Right cardiac atrium (tissue), 5 donors: ENCODE measurements at regions of chr9 and their contacts with region 1.

Region 1: GRCh38 chr9:5186416-5187169 is 1.2 kb upstream of the INSL6 start:
- DNase-seq: peak in 1 of 3 donors; percentile 71
- ATAC-seq: peak; percentile 66 to 67
- H3K4me3 ChIP-seq: no peak overlapping the region
- H3K27ac ChIP-seq: no peak overlapping the region
- H3K4me1 ChIP-seq: no peaks in the 10 kb centered on the region
- H3K27me3 ChIP-seq: no peaks in the 10 kb centered on the region

Region 2: GRCh38 chr9:5052838-5053237 is 133.8 kb before region 1 on chr9:
- intact Hi-C with region 1: no loop called
- DNase-seq: no peak
- ATAC-seq: no peak
- H3K4me3 ChIP-seq: no peak overlapping the region
- H3K27ac ChIP-seq: no peak overlapping the region
- H3K4me1 ChIP-seq: no peaks in the 10 kb centered on the region
- H3K27me3 ChIP-seq: no peaks in the 10 kb centered on the region

Region 3: DNA sequence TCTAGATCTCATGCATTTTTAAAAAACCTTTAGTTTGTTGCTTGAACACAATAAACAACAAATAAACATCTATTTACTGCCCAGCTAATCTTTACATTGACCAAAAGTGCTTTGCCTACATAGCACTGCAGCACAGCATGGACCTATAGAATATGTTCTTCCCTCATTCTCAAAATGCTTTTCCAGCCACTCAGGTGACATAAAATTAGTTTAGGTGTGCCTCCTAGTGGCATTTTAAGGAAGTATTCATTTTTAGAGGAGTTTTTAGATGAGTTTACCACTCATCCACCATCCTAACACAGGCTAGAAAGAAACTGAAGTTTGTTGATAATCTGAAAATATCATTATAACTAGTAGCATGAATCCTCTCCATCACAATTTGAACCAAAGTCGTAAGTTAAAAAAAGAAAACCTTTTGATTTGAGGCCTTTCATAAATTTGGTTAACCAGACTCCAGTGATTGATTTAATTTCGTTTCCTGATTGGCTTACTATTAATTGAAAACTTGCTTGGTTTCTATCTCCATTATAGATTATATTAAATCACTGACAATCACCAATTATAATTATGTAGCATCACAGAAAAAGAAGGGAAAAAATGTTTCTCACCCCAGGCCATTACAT is 238.5 kb after region 1 on chr9:
- intact Hi-C with region 1: loop called in 1 of 4 experiments (anchors 10 kb)
- DNase-seq: no peak
- ATAC-seq: no peak
- H3K4me3 ChIP-seq: no peak overlapping the region
- H3K27ac ChIP-seq: no peak overlapping the region
- H3K4me1 ChIP-seq: no peaks in the 10 kb centered on the region
- H3K27me3 ChIP-seq: no peaks in the 10 kb centered on the region

Region 4: DNA sequence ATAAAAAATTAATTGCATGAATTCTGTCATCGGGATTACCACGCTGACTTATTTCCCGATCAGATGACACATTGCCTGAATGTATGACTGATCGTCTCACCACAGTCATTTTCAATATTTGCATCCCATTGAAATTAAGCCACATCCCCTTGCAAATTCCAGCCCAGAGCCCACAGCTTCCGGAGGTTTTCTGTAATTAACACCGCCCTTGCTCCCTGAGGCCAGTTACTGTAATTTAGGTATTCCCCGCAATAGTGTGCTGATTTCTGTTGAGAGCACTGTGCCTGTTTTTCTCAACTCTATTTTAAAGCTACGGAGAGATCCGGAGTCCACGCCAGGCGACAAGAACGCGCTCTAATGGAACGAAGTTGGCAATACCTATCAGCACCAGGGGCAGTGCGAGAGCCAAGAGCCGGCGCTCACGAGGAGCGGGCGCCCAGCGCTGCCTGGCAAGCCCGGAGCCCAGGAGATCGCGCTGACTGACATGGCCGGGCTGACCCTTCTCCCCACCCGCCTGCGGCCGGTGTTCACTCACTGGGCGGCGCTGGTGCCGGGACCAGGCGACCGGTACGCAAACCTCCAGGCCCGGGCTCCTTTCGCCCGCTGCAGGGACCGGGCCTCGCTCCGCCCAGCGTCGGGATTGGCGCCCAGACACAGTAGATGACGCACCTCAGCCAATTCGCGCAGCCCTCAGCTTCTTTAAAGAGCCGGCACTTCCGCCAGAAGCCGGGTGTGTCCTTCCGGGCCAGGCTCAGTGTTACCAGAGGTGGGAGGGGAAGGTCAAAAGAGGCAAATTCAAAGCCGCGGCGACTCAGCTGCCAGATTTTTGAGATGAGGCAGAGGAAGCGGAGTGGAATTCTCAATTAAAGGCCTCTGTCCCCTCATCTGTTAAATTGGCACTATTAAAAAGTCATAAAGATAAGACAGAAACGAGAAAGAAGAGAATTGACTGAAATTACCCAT is 250.9 kb after region 1 on chr9 and contains the start of gene PLGRKT:
- intact Hi-C with region 1: loop called in 2 of 4 experiments (anchors 10 kb)
- DNase-seq: peak; percentile 97 to 98 (median 98)
- ATAC-seq: peak; percentile 99 to 100
- H3K4me3 ChIP-seq: peak within 1 kb of the TSS; percentile 61
- H3K27ac ChIP-seq: peak within 1 kb of the TSS; percentile 91
- H3K4me1 ChIP-seq: peaks cover 5% of the 10 kb centered on the region
- H3K27me3 ChIP-seq: no peaks in the 10 kb centered on the region
- total RNA-seq, gene PLGRKT: 31.5 to 40.3 (median 34.1) TPM

Region 5: GRCh38 chr9:5608298-5609225 is 422.0 kb after region 1 on chr9:
- intact Hi-C with region 1: loop called in 3 of 4 experiments (anchors 5 to 10 kb)
- DNase-seq: no peak
- ATAC-seq: peak; percentile 80 to 85
- H3K4me3 ChIP-seq: peak overlapping the region; percentile 66
- H3K27ac ChIP-seq: peak overlapping the region; percentile 85
- H3K4me1 ChIP-seq: peaks cover 4% of the 10 kb centered on the region
- H3K27me3 ChIP-seq: no peaks in the 10 kb centered on the region

Region 6: DNA sequence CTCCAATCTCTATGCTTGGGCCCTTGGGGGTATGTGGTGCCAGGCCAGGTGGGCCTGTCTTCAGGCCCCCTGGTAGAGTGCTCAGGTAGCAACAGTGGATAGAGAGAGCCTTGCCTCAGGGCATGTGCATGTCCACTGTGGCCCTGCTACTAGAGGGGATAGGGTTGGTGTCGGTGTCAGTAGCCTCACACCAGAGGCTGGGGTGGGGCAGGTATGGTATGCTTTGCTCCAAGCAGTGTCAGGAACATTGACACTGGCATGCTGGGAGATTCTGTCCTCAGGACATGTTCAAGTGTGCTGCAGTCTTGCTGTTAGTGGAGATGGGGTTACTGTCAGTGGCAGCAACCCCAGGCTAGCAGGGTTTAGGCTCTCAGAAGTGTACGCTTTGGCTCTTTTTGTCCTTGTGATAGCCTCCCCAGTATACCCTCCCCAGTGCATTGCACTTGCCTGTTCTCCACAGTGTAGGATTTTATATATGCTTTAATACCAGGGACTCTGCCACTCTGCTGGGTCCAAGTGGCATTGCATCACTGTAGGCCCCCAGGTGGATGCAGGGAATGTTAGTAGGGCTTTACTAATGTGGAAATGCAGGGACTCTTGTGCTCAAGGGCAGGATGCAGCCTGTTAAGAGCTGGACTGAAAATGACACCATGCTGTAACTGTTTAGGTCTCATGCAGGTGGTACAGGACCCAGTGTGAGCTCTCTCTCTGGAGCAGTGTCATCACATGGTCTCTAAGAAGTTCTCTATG is 463.9 kb after region 1 on chr9:
- intact Hi-C with region 1: no loop called
- DNase-seq: no peak
- ATAC-seq: peak in 1 of 2 donors; percentile 34
- H3K4me3 ChIP-seq: no peak overlapping the region
- H3K27ac ChIP-seq: no peak overlapping the region
- H3K4me1 ChIP-seq: no peaks in the 10 kb centered on the region
- H3K27me3 ChIP-seq: no peaks in the 10 kb centered on the region